Left ventricle myocardium superior (tissue), 1 donor: ENCODE measurements at regions of chr12 and their contacts with region 1.

Region 1: GRCh38 chr12:56759263-56759908 is 3.7 kb upstream of the HSD17B6 start:
- DNase-seq: no peak
- ATAC-seq: no peak

Region 2: DNA sequence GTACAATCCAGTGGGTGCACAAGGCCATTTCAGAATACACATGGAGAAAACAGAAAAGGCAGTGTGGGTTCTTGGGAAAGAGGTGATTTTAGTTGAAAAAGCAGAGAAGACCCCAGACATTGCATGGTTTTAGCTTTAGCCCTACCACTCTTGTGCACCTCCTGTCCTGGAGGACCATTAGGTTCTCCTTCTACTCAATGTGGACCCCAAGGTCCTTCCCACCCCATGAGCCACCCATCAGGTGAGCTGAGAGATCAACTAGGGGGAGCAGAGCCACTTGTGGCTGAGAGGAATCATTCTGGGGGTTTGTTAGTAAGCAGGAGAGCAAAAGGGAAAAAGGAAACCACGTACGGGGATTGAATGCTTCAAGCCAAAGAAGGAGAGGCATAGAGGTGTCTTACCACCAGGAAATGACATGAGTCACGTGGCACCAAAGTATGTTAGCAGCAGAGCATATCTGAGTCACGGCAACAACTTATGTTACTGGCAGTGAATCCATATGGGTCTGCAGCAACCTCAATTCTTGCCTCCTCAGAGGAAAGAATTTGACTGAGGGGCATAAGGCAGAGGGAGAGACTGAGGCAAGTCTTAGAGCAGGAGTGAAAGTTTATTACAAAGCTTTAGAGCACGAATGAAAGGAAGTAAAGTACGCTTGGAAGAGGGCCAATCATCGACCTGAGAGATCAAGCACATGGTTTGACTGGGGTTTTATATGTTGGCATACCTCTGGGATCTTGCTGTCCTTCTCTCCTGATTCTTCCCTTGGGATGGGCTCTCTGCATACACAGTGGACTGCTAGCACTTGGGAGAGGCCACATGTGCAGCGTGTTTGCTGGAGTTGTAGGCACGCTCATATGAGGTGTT is 77.6 kb after region 1 on chr12:
- intact Hi-C with region 1: no loop called
- DNase-seq: no peak
- ATAC-seq: no peak

Region 3: DNA sequence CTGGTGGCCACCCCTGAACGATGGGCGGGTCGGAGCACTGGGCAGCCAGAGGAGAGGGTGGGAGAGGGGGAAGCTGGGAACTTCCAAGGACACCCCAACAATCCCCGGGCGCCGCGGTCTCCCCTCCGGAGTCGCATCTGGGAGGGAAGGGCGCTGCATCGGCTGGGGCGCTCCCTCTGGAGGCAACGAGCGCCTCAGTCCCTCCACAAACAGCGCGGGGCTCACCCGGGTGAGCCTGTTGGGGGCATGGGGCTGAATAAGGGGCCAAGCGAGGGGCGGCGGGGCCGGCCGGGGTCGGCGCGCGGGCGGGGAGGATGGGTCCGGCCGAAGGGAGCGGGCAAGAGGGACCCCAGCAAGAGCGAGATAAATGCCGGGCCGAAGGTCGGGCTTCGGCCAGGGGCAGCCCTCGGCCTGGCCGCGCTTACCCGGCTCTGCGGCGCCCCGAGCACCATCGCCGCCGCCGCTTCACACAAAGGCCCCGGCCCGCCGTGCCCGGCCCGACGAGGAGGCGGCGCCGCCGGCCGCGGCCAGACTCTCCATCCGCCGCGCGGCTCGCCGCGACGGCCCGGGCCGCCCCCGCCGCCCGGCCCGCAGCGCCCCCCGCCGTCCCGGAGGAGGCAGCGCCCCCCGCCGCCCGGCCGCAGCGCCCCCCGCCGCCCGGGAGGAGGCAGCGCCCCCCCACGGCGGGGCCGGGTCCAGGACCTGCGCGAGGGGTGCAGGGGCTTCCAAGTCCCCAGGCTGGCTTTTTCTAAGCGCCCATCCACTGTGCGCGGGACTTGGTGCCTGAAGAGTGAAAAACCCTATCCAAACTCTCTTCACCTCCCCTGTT is 246.8 kb after region 1 on chr12 and contains the start of gene ZBTB39:
- intact Hi-C with region 1: loop called (anchors 5 kb)
- DNase-seq: peak; percentile 82
- ATAC-seq: peak; percentile 88
- total RNA-seq, gene ZBTB39: 3.4 TPM